Activated CD4-positive, alpha-beta T cell treated with anti-CD3 and anti-CD28 coated beads for 36 hours (primary cell): ENCODE measurements at regions of chr11 and their contacts with region 1.

Region 1: DNA sequence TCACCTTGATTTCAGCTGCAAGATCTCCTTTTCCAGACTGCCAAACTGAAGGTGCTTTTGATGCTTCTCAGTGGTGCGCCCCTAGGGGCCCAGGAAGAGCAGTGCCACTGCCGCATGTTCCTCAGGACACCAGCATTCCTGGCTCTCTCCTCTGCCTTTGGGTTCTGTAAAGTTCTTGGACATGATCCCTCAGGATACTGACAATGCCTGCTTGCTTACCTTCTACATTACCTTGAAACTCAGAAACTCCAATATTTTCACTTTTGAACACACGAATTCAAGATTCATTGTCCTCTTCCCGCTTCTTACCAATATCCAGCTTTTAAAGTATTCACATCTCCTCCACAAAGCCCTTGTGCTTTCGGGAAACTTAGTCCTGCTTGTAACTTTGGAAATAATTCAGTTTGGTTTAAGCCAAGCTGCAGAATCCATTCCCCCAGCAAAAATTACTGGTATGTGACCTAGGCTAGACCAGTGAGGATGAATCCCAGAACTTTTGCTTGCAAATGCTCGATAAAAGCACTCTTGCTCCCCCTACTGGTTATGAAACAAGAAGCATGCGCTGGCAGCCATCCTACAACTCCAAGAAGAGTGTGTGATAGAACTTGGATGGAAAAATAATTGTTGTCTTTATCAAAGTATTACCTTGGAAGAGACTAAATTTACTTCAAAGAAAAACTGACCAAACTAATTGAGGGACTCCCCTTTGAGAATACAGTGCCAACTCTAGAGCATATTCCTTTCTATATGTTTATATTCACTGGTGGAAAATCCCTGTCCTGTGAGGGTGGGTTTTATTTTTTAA is 16.5 kb upstream of the OR5B21 start:
- DNase-seq: peak; percentile 69
- ATAC-seq: peak; percentile 69
- H3K4me3 Mint-ChIP-seq: peak overlapping the region; percentile 47
- H3K27ac Mint-ChIP-seq: peak overlapping the region; percentile 90
- H3K4me1 Mint-ChIP-seq: peaks cover 58% of the 10 kb centered on the region
- H3K27me3 Mint-ChIP-seq: no peaks in the 10 kb centered on the region

Region 2: DNA sequence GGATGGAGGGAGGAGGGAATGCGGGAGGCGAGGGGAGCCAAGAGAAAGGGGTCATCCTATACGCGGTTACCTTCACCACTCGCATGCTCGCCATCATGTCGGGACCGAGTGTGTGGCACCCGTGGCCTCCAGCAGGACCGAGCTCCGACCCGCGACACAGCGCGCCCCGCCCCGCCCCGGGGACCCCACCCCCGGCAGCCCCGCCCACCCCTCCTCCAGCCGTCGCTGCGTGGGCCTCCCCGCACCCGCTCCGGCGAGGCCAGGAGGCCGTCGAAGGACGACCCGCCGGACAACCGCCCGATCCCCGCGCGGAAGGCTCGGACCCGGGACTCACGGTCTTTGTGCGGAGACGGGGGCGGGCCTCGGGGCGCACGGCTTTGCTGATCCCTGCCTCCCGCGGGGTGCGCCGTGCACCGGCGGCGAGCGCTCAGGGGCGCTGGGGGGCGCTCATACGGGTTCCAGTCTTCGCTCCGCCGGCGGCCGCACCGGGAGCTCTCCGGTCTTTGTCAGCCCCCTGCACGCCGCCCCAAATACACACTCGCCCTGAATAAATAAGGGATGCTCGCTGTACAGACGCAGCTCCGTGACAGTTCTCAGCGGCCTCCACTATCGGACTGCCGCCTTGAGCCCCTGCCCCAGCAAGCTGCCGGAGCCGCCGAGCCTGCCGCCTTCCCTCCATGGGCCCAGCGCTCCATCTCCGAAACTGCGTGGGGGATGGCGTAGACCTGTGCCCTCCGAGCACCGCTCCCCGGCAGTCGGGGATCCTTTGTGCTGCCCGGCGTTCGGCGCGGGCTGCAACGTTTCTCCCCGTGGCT is 956.7 kb before region 1 on chr11 and contains the start of gene UBE2L6:
- CTCF ChIA-PET with region 1: no interaction called
- POLR2A ChIA-PET with region 1: no interaction called
- intact Hi-C with region 1: loop called in 1 of 2 experiments (anchors 5 kb)
- DNase-seq: peak; percentile 95
- ATAC-seq: peak; percentile 80
- H3K4me3 Mint-ChIP-seq: peak within 1 kb of the TSS; percentile 89
- H3K27ac Mint-ChIP-seq: peak within 1 kb of the TSS; percentile 98
- H3K4me1 Mint-ChIP-seq: peaks cover 29% of the 10 kb centered on the region
- H3K27me3 Mint-ChIP-seq: no peaks in the 10 kb centered on the region
- total RNA-seq, gene UBE2L6: 179 to 252 TPM

Region 3: GRCh38 chr11:57792060-57792541 is 732.3 kb before region 1 on chr11:
- CTCF ChIA-PET with region 1: no interaction called
- POLR2A ChIA-PET with region 1: no interaction called
- intact Hi-C with region 1: loop called in 1 of 2 experiments (anchors 10 kb)
- DNase-seq: peak; percentile 89
- ATAC-seq: peak; percentile 96
- H3K4me3 Mint-ChIP-seq: peak overlapping the region; percentile 34
- H3K27ac Mint-ChIP-seq: peak overlapping the region; percentile 89
- H3K4me1 Mint-ChIP-seq: peaks cover 33% of the 10 kb centered on the region
- H3K27me3 Mint-ChIP-seq: no peaks in the 10 kb centered on the region

Region 4: GRCh38 chr11:58503361-58503856 is 21.0 kb before region 1 on chr11:
- CTCF ChIA-PET with region 1: interaction called, 21 read pairs
- POLR2A ChIA-PET with region 1: interaction called, 3 read pairs
- intact Hi-C with region 1: no loop called
- DNase-seq: no peak
- ATAC-seq: no peak
- H3K4me3 Mint-ChIP-seq: no peak overlapping the region
- H3K27ac Mint-ChIP-seq: no peak overlapping the region
- H3K4me1 Mint-ChIP-seq: peaks cover 28% of the 10 kb centered on the region
- H3K27me3 Mint-ChIP-seq: no peaks in the 10 kb centered on the region

Region 5: DNA sequence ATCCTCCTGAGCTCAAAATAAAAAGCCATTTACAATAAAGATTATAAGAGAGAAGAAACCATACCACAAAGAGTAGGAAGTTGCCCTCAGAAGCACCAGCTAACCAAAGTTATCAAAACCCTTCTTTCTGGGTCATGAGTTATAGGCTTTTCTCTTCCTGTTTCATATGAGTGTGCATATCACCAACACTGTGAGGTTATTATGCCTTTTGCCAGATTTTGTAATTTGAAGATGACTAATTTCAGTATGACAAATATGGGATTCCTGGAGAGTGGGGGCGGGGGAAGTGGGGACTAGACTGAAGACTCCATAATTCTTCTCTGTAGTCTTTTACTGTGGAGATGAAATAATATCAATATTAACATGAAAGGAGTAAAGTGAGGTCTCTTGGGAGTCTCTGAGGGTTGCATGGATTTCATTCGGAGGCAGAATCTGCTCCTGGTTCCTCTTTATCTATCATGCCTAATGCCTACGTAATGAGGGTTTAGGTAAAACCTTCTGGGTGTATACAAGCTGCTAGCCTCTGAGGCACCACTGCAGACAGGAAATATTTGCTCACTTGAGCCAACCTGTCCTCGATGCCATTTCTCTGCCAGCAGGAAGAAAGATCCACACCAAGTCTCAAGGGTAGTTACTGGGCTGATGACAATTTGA is 49.1 kb after region 1 on chr11:
- CTCF ChIA-PET with region 1: interaction called, 45 read pairs
- POLR2A ChIA-PET with region 1: interaction called, 4 read pairs
- intact Hi-C with region 1: loop called (anchors 1 kb)
- DNase-seq: peak; percentile 84
- ATAC-seq: peak; percentile 26
- H3K4me3 Mint-ChIP-seq: peak overlapping the region; percentile 89
- H3K27ac Mint-ChIP-seq: peak overlapping the region; percentile 96
- H3K4me1 Mint-ChIP-seq: peaks cover 51% of the 10 kb centered on the region
- H3K27me3 Mint-ChIP-seq: no peaks in the 10 kb centered on the region